Activated naive CD4-positive, alpha-beta T cell treated with anti-CD3 and anti-CD28 coated beads, Interleukin-2, amount 10 ng/mL, durations not matched to agents 7 days and 5 days (primary cell): ENCODE measurements at regions of chr12 and their contacts with region 1.

Region 1: DNA sequence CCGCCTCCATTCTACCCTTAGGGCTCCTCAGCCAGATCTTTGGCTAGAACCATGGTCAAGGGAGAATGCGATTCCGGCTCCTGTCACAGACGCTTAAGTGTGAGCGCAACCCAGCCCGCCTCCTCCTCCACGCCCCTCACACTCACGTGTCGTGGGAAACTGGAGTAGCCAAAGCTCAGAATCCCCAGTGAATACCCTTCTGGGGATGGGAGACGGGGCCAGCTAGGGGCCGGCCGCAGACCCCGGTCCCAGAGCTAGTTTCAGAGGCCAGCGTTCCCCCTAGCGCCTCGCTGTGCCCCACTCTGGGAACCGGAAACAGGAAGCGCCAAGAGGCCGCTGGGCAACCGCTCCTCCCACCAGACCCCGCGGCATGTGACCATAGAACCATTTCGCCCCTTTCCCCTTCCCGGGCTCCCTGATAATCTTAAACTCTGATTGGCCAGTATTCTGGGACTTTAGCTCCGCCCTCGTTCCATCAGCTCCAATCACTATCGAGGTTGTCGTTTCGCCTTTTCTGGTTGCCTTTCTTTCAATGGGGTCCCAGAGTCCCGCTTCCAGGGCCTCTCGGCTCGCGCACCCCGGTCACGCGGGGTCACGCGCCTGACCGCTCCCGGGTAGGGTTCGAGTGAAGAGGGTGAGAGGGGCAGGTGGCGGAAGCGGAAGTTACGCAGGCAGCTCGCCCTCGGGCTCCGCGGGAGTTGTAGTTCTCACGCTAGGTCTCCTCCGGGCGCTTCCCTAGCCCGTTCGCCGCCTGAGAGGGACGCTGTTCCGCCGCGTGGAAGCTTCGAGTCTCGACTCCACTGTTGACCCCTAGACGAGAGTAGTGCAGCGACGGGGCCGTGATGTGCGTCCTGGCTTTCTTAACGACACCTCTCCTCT is at the start of gene M6PR:
- DNase-seq: peak; percentile 95
- H3K4me3 Mint-ChIP-seq: peak within 1 kb of the TSS; percentile 98
- H3K27ac Mint-ChIP-seq: peak within 1 kb of the TSS; percentile 93
- H3K4me1 Mint-ChIP-seq: peaks cover 66% of the 10 kb centered on the region
- H3K27me3 Mint-ChIP-seq: no peaks in the 10 kb centered on the region

Region 2: DNA sequence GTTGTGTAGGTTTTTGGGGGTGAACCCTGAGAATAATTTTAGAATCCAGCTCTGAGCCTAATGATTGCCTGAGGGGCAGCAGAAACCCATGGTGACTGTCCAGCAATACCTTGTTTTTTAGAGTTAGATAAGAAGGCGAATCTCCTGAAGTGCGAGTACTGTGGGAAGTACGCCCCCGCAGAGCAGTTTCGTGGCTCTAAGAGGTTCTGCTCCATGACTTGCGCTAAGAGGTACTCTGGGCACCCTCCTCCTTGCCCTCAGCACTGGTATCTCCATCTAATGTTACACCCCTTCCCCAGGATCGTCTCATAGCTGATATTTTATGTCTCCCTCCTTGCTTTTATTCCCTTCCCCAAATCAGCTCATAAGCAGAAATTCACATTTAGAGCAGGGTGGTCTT is 12.8 kb before region 1 on chr12:
- CTCF ChIA-PET with region 1: no interaction called
- DNase-seq: no peak
- H3K4me3 Mint-ChIP-seq: no peak overlapping the region
- H3K27ac Mint-ChIP-seq: no peak overlapping the region
- H3K4me1 Mint-ChIP-seq: no peaks in the 10 kb centered on the region
- H3K27me3 Mint-ChIP-seq: no peaks in the 10 kb centered on the region

Region 3: GRCh38 chr12:9032202-9033178 is 82.9 kb after region 1 on chr12:
- CTCF ChIA-PET with region 1: interaction called, 82 read pairs
- DNase-seq: no peak
- H3K4me3 Mint-ChIP-seq: no peak overlapping the region
- H3K27ac Mint-ChIP-seq: no peak overlapping the region
- H3K4me1 Mint-ChIP-seq: peaks cover 32% of the 10 kb centered on the region
- H3K27me3 Mint-ChIP-seq: no peaks in the 10 kb centered on the region

Region 4: GRCh38 chr12:9039397-9039977 is 89.9 kb after region 1 on chr12:
- CTCF ChIA-PET with region 1: interaction called, 82 read pairs
- DNase-seq: peak; percentile 32
- H3K4me3 Mint-ChIP-seq: no peak overlapping the region
- H3K27ac Mint-ChIP-seq: no peak overlapping the region
- H3K4me1 Mint-ChIP-seq: peaks cover 39% of the 10 kb centered on the region
- H3K27me3 Mint-ChIP-seq: no peaks in the 10 kb centered on the region

Region 5: DNA sequence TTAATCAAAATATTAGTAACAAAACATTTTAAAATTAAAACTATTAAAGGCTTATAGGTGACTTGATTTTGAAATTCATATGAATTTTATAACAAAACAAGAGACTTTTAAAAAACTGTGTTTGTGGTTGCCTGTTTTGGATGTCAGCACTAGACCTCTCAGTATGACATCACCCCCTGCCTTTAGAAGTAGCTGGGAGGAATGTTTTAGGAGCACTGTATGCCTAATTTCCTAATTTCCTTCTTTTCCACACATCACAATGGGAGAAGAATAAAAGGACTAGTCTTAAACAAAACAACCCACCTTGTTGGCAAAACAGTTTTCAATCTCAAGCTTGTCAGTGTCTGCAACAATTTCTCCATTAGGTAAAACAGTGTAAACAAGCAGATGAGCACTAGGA is 306.8 kb after region 1 on chr12:
- CTCF ChIA-PET with region 1: no interaction called
- DNase-seq: no peak
- H3K4me3 Mint-ChIP-seq: no peak overlapping the region
- H3K27ac Mint-ChIP-seq: no peak overlapping the region
- H3K4me1 Mint-ChIP-seq: peaks cover 4% of the 10 kb centered on the region
- H3K27me3 Mint-ChIP-seq: peaks cover 12% of the 10 kb centered on the region